ENCODE measurements at regions of chr2 and their contacts with region 1.

Region 1: DNA sequence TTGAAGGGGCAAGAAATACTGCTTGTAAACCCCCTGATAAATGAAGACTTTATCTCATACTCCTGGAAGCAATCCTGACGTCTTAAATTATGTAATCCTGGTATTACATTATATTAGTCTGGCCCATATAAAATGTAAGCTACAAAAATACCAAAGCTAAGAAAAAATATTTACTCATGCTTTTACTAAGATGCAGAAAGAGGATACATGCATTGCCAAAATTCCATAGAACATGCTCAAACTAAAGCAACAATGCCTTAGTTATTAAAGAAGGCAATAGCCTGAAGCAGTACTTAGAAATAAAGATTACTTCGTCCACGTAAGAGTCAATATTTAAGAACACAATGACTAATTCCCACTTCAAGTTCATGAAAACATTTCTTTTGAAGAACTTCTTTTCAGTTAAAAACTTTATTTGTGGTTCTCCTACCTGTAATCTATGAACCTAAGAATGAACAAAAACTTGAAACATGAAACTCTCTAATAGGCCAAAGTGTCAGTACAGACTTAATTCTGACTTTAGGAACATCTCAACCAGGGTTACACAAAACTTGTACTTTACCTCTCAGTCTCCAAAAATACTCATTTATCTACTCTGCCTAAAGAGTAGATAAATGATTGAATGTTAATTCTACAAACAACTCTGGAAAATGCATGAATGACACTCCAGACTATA is 117.3 kb downstream of the THADA start:
- DNase-seq: no peak
- ATAC-seq: peak; percentile 56
- H3K4me3 ChIP-seq: no peak overlapping the region
- H3K27ac ChIP-seq: peak overlapping the region; percentile 2; the same call in 1 of the 2 replicates
- H3K4me1 ChIP-seq: peaks cover 25% of the 10 kb centered on the region
- H3K27me3 ChIP-seq: no peaks in the 10 kb centered on the region
- CTCF ChIP-seq: no peak
- EP300 ChIP-seq: peak; percentile 34 to 47; a peak in 1 of 4 replicates
- POLR2A ChIP-seq: no peak
- RAD21 ChIP-seq: no peak

Region 2: GRCh38 chr2:43402452-43402944 is 76.1 kb before region 1 on chr2:
- CTCF ChIA-PET with region 1: interaction called, 42 read pairs
- POLR2A ChIA-PET with region 1: interaction called, 20 read pairs
- RAD21 ChIA-PET with region 1: interaction called, 112 read pairs
- SMC1A ChIA-PET with region 1: interaction called, 76 read pairs
- in situ Hi-C with region 1: loop called (anchors 5 kb)
- intact Hi-C with region 1: no loop called
- DNase-seq: peak; percentile 79
- ATAC-seq: peak; percentile 73
- H3K4me3 ChIP-seq: peak overlapping the region; percentile 40
- H3K27ac ChIP-seq: peak overlapping the region; percentile 97
- H3K4me1 ChIP-seq: peaks cover 64% of the 10 kb centered on the region
- H3K27me3 ChIP-seq: no peaks in the 10 kb centered on the region
- CTCF ChIP-seq: no peak
- EP300 ChIP-seq: peak in 1 of 2 experiments; percentile 22; a peak in 1 of 4 replicates
- POLR2A ChIP-seq: peak; percentile 38
- RAD21 ChIP-seq: peak; percentile 34

Region 3: GRCh38 chr2:43408407-43409160 is 70.0 kb before region 1 on chr2:
- CTCF ChIA-PET with region 1: interaction called, 42 read pairs
- POLR2A ChIA-PET with region 1: interaction called, 13 read pairs
- RAD21 ChIA-PET with region 1: interaction called, 112 read pairs
- SMC1A ChIA-PET with region 1: interaction called, 76 read pairs
- in situ Hi-C with region 1: loop called (anchors 5 kb)
- intact Hi-C with region 1: no loop called
- DNase-seq: peak; percentile 76
- ATAC-seq: peak; percentile 86
- H3K4me3 ChIP-seq: no peak overlapping the region
- H3K27ac ChIP-seq: peak overlapping the region; percentile 94
- H3K4me1 ChIP-seq: peaks cover 50% of the 10 kb centered on the region
- H3K27me3 ChIP-seq: no peaks in the 10 kb centered on the region
- CTCF ChIP-seq: no peak
- EP300 ChIP-seq: peak; percentile 71 to 87; a peak in 2 of 4 replicates
- POLR2A ChIP-seq: no peak
- RAD21 ChIP-seq: no peak

Region 4: DNA sequence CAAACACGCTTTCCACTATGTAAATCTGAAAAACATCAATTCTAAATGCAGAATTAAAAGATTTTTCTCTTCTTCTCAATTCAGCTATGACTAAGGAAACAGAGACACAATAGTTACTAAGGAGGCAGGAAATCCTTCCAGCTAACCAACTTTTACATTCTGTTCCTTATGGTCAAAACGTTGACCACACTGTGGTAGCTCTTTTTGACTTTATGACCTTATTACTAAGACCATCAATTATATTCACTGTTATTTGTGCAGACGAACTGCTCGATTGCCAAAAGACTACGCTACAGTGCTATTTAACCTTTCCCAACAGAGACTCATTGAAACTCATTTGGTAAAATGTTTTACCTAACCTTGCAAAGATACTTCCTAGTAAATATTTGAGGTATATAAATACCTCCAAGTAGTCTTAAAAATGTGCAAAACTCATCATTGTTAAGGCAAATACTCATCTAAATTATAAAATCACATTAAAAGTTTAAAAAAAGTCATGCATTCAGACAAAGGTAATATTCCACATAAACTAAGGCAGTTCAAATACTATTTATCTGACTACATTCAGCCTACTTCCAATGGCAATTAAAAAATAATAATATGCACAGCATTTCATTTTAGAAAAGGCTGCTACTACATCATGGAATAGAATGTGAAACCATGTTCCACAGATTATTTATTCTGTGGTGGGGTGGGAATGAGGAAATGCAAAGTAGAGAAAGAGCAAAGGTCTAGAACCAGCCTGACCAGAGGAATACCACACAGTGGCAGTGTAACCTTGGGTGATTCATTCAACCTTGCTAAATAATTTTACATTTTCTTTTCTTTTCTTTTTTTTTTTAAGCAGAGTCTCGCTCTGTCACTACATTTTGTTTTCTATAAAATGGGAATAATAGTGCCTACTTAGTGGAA is 22.6 kb before region 1 on chr2:
- CTCF ChIA-PET with region 1: interaction called, 26 read pairs
- POLR2A ChIA-PET with region 1: interaction called, 11 read pairs
- RAD21 ChIA-PET with region 1: interaction called, 64 read pairs
- SMC1A ChIA-PET with region 1: interaction called, 53 read pairs
- in situ Hi-C with region 1: no loop called
- intact Hi-C with region 1: loop called (anchors 2 kb)
- DNase-seq: peak; percentile 35
- ATAC-seq: peak; percentile 75
- H3K4me3 ChIP-seq: no peak overlapping the region
- H3K27ac ChIP-seq: peak overlapping the region; percentile 1; the same call in 1 of the 2 replicates
- H3K4me1 ChIP-seq: peaks cover 35% of the 10 kb centered on the region
- H3K27me3 ChIP-seq: no peaks in the 10 kb centered on the region
- CTCF ChIP-seq: peak; percentile 5 to 26 (median 21); a peak in 3 of 6 replicates
- EP300 ChIP-seq: peak in 1 of 2 experiments; percentile 36; a peak in 1 of 4 replicates
- POLR2A ChIP-seq: no peak
- RAD21 ChIP-seq: 0 out of 2 replicates have a peak, but pooled peaks have one; percentile 9

Region 5: DNA sequence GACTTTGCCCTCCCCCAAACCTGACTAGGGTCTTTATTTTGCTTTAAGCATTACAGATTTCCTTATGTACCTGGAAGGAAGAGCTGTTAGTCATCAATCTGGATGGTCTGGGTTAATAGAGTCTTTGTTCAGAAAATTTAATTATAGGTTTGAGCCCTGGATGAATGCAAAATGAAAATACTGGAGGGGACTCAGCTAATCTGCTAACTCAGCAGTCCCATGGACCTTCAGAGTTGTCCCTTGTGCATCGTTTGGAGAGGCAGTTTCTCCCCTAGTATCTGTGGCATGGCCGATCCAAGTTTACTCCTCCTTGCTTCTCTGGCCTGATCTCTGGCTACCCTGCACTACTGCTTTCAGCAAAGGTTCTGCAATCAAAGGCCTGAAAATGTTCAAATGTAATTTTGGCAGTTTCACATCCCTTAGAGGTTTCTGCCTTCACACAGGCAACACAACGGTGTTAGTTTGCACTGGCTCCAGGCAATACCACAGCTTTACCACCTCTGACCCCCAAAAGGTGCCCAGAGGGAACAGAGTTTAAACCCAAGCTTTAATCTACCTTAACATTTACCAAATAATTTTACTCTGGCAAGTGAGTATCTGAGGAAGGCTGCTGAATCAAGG is 17.0 kb before region 1 on chr2:
- CTCF ChIA-PET with region 1: interaction called, 26 read pairs
- POLR2A ChIA-PET with region 1: interaction called, 11 read pairs
- RAD21 ChIA-PET with region 1: interaction called, 64 read pairs
- SMC1A ChIA-PET with region 1: interaction called, 84 read pairs
- in situ Hi-C with region 1: no loop called
- intact Hi-C with region 1: loop called (anchors 2 kb)
- DNase-seq: peak; percentile 81
- ATAC-seq: peak; percentile 97
- H3K4me3 ChIP-seq: peak overlapping the region; percentile 12; the same call in 1 of the 2 replicates
- H3K27ac ChIP-seq: peak overlapping the region; percentile 76
- H3K4me1 ChIP-seq: peaks cover 40% of the 10 kb centered on the region
- H3K27me3 ChIP-seq: no peaks in the 10 kb centered on the region
- CTCF ChIP-seq: no peak
- EP300 ChIP-seq: peak; percentile 53 to 62; a peak in 2 of 4 replicates
- POLR2A ChIP-seq: peak; percentile 54
- RAD21 ChIP-seq: peak; percentile 24; the same call in 1 of the 2 replicates

Region 6: DNA sequence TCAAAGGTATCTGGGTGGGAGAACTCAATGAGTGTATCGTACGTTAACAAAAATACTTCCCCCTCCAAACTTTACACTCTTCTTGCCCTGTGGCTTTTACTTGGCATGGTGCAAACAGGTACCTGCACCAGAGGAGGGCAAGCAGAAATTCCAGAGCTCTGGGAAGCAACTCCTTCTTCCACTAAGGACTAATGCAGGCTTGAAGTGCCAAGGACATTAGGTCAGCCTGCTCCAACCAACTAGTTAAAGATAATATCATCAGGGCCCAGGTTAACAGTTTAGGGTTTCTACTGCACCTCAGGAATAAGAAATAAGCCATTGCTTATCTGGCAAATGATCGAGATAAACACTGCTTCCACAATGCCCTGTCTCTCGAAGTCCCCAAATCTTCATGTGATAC is 446.9 kb after region 1 on chr2:
- CTCF ChIA-PET with region 1: no interaction called
- POLR2A ChIA-PET with region 1: no interaction called
- RAD21 ChIA-PET with region 1: no interaction called
- SMC1A ChIA-PET with region 1: no interaction called
- in situ Hi-C with region 1: no loop called
- intact Hi-C with region 1: no loop called
- DNase-seq: no peak
- ATAC-seq: no peak
- H3K4me3 ChIP-seq: no peak overlapping the region
- H3K27ac ChIP-seq: no peak overlapping the region
- H3K4me1 ChIP-seq: peaks cover 3% of the 10 kb centered on the region; the same call in 1 of the 2 replicates
- H3K27me3 ChIP-seq: no peaks in the 10 kb centered on the region
- CTCF ChIP-seq: no peak
- EP300 ChIP-seq: no peak
- POLR2A ChIP-seq: no peak
- RAD21 ChIP-seq: no peak

Measured in GM12878 (cell line).